Cardiac septum (tissue), 1 donor: ENCODE measurements at regions of chr11 and their contacts with region 1.

Region 1: DNA sequence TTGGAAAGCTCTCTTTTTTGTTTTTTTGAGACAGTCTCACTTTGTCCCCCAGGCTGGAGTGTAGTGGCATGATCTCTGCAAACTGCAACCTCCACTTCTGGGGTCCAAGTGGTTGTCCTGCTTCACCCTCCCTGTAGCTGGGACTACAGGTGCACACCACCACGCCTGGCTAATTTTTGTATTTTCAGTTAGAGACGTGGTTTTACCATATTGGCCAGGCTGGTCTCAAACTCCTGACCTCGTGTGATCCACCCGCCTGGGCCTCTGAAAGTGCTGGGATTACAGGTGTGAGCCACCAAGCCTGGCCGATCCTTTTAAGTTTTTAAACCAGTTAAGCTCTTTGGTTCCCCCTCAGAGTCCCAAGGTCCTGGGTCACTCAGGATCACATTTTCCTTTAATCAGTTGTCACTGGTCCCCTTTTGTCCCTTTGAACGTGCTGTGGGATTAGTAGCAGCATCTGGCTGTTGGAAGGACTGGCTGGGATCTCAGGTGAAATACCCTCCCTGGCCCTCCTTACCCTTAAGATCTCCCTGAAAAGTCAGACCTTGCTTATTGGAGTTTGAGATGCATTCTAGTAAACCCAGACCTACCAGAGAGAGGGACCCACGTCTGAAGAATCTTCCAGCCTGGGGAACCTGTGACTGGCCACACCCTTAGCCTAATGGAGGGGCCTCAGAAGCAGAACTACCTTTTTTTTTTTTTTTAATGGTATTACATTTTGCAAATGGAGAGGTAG is 8.1 kb downstream of the MALAT1 start:
- DNase-seq: peak; percentile 75

Region 2: DNA sequence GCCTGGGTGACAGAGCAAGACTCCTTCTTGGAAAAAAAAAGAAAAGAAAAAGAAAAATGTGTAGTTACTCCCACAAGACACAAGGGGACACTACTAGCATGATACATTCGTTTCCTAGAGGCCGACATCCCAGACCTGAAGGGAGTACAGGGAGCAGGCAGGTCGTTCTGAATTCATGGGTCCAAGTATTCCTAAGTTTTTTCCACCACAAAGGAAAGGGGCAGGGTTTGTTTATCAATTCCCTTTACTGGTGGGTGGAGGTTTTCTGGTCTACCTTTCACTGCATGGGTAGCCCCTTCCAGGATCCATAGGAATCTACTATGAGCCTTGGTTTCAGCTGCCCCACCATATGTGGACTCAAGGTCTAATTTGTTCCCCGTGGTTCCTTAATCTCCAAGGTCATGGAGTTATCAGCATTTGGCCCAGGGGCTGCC is 140.6 kb before region 1 on chr11:
- intact Hi-C with region 1: loop called (anchors 1 kb)
- DNase-seq: no peak

Region 3: DNA sequence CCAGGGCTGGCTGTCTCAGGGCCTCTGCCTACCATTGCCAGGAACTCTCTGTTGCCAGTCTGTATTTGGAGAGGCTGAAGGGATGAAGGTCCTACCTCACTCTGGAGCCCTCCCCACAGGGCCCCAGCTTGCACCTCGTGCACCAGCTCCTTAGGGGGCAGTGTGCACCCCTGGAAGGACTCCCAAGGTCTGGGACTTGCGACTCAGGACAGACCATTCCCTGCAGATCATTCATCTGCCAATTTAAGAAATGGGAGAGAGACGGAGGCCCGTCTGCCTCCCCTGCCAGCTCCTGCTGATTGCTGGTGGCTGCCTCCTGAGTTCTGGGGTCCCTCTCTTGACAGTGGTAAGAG is 35.6 kb before region 1 on chr11:
- intact Hi-C with region 1: loop called (anchors 2 kb)
- DNase-seq: peak; percentile 89